ENCODE measurements at regions of chr22 and their contacts with region 1.

Region 1: DNA sequence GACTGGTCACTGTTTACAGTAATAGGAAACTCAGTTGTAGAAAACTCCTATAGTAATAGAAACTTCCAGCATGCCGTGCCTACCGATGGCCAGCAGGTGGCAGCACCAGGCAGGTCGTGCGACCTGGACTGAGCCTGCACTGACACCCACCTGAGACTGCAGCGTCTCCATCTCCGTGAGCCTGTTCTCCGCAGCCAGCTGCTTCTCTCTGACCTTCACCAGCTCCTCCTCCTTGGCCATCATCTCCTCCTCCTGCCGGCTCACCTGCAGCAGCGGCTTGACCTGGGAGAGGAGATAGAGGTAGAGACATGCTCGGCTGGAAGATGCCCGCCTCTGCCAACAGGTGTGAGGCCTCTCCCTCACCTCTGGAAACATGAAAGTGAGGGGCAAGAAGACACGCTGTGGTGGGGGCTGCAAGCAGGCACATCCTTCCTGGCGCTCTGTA is 48.5 kb downstream of the APOL1 start:
- DNase-seq: peak; percentile 73 to 91 (median 81)
- ATAC-seq: peak; percentile 88
- H3K4me3 ChIP-seq: no peak overlapping the region
- H3K4me3 Mint-ChIP-seq: peak overlapping the region; percentile 49
- H3K27ac ChIP-seq: no peak overlapping the region
- H3K27ac Mint-ChIP-seq: peak overlapping the region; percentile 84
- H3K4me1 ChIP-seq: peaks cover 14% of the 10 kb centered on the region
- H3K4me1 Mint-ChIP-seq: peaks cover 19% of the 10 kb centered on the region
- H3K27me3 ChIP-seq: no peaks in the 10 kb centered on the region
- H3K27me3 Mint-ChIP-seq: no peaks in the 10 kb centered on the region
- CTCF ChIP-seq: peak; percentile 93

Region 2: DNA sequence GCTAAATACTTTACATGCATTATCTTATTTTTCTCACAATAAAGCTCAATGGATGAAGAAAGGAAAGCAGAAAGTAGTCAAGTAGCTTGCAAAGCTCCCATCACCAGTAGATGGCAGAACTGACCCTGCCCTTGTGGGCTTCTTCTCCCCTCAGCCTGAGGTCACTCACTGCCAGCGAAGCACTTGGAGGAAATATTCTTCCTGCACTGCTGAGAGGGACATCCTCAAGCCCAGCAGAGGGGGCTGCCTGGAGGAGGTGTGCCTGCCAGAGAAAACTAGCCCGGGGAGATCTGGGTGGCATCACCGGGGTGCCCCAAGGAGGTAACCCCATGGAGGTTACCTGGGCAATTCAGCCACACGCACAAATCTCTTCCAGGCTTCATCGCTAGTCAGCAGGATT is 106.4 kb before region 1 on chr22:
- CTCF ChIA-PET with region 1: no interaction called
- POLR2A ChIA-PET with region 1: no interaction called
- intact Hi-C with region 1: no loop called
- DNase-seq: peak in 13 of 14 experiments; percentile 6 to 64 (median 23)
- ATAC-seq: peak; percentile 39
- H3K4me3 ChIP-seq: no peak overlapping the region
- H3K4me3 Mint-ChIP-seq: no peak overlapping the region
- H3K27ac ChIP-seq: no peak overlapping the region
- H3K27ac Mint-ChIP-seq: no peak overlapping the region
- H3K4me1 ChIP-seq: peaks cover 9% of the 10 kb centered on the region
- H3K4me1 Mint-ChIP-seq: peaks cover 6% of the 10 kb centered on the region
- H3K27me3 ChIP-seq: no peaks in the 10 kb centered on the region
- H3K27me3 Mint-ChIP-seq: peaks cover 18% of the 10 kb centered on the region
- CTCF ChIP-seq: peak; percentile 53

Region 3: DNA sequence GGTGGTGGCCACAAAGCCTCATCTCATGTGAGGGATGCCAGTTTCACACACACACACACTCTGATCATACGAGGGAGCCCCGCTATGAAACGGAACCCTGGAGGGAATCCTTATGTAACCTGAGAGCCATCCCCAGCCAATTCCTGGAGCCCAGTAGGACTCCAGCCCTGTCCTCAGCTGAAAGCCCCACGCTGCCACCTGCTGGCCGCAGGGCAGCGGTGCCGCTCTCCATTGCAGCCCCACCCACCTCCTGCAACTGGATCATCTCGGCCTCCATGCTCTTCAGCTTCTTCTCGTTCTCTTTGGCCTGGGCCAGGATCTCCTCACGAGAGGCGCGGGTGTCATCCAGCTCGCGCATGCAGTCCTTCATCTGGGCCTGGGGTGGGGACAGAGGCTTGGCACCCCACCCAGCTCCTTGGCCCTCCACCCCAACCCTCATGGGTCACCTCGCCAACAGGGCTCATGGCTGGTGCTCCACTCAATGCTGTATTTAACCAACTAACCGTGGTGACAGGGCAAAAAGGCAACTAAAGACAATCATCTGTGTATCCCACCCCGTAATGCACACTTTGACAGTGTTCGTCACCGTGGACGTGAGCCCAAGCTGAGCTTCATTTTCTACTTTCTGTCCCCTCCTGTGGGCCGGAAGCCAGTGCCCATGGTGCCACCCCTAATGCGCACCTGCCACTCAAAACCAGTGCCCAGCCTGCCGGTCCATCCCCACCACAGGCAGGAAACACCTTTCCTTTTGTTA is 14.8 kb before region 1 on chr22:
- CTCF ChIA-PET with region 1: interaction called, 13 read pairs
- POLR2A ChIA-PET with region 1: interaction called, 6 read pairs
- intact Hi-C with region 1: no loop called
- DNase-seq: peak; percentile 39 to 82 (median 61)
- ATAC-seq: peak; percentile 64
- H3K4me3 ChIP-seq: no peak overlapping the region
- H3K4me3 Mint-ChIP-seq: peak overlapping the region; percentile 56
- H3K27ac ChIP-seq: peak overlapping the region; percentile 9 to 47
- H3K27ac Mint-ChIP-seq: peak overlapping the region; percentile 95
- H3K4me1 ChIP-seq: peaks cover 55% of the 10 kb centered on the region
- H3K4me1 Mint-ChIP-seq: peaks cover 36% of the 10 kb centered on the region
- H3K27me3 ChIP-seq: no peaks in the 10 kb centered on the region
- H3K27me3 Mint-ChIP-seq: no peaks in the 10 kb centered on the region
- CTCF ChIP-seq: peak; percentile 73

Region 4: DNA sequence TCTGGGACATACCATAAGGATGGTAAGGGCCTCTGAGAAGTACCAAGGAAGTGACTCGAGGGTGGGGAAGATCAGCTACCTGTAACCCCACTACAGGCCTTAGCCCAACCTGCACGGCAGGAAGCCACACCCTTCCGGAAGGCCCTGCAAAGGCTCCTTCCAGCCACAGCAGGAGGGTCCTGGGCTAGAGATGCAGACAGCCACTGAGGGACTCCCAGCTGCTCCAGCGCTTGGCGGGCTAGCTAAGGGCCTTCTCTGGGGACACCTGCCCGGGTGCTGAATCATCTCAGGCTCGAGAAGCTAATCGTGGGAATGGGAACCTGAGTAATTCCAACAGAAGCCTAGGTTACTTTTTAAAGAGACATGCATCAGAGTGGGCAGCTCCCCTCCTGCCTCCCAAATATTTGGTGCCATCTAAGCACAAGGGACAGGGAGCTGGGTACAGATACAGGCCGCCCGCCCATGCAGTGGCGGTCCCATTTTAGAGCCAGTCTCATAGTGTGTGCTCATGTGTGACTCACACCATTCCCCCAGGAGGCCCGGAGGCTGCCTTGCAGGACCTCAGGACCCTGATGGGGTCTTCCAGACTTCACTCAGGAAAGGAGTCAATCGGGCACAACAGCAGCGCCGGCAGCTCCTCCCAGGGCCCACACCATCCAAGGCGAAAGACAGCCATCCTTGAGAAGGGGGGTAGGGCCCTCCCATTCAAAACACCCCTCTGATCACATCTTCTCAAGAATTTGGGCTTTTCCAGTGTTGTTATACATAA is 78.4 kb after region 1 on chr22:
- CTCF ChIA-PET with region 1: interaction called, 11 read pairs
- POLR2A ChIA-PET with region 1: interaction called, 7 read pairs
- intact Hi-C with region 1: no loop called
- DNase-seq: peak in 12 of 14 experiments; percentile 38 to 89 (median 63)
- ATAC-seq: peak; percentile 37
- H3K4me3 ChIP-seq: peak overlapping the region; percentile 31
- H3K4me3 Mint-ChIP-seq: peak overlapping the region; percentile 70
- H3K27ac ChIP-seq: peak overlapping the region; percentile 85 to 95
- H3K27ac Mint-ChIP-seq: peak overlapping the region; percentile 93
- H3K4me1 ChIP-seq: peaks cover 98% of the 10 kb centered on the region
- H3K4me1 Mint-ChIP-seq: peaks cover 85% of the 10 kb centered on the region
- H3K27me3 ChIP-seq: no peaks in the 10 kb centered on the region
- H3K27me3 Mint-ChIP-seq: no peaks in the 10 kb centered on the region
- CTCF ChIP-seq: no peak

Region 5: DNA sequence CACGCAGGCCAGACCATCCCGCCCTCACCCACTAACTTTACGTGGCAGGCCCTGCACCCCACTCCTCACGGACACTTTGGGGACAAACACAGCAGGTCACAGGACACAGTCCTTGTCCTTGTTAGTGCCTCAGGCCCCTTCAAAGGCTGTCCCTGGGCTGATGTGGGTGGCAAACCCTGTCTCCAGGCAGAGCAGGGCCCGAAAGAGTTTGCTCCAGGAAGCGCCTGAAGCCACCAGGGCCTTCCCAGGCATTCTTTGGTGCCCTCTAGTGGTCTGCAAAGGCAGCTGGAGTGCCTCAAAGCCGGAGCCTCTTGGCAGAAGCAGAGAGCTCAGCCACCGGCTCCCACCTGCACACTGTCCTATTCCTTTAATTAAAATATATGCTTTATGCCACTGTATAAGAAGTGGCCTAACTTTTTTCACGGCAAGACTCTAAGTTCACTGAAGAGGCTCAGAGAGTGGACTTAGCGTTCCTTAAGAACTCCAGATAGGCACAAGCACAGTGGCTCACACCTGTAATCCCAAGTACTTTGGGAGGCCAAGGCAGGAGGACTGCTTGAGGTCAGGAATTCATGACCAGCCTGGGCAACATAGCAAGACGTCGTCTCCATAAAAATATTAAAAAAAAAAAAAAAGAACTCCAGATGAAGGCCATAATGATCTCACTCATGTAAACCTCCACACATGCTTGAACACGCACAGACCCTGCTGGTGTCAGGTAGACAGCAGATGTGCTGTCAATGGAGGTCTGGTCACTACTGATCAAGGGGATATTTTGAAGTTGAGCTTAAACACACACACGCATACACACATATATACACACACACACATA is 169.0 kb after region 1 on chr22:
- CTCF ChIA-PET with region 1: interaction called, 60 read pairs
- POLR2A ChIA-PET with region 1: interaction called, 7 read pairs
- intact Hi-C with region 1: loop called (anchors 1 kb)
- DNase-seq: peak; percentile 71 to 92 (median 78)
- ATAC-seq: peak; percentile 98
- H3K4me3 ChIP-seq: no peak overlapping the region
- H3K4me3 Mint-ChIP-seq: no peak overlapping the region
- H3K27ac ChIP-seq: no peak overlapping the region
- H3K27ac Mint-ChIP-seq: peak overlapping the region; percentile 70
- H3K4me1 ChIP-seq: peaks cover 27% of the 10 kb centered on the region
- H3K4me1 Mint-ChIP-seq: peaks cover 26% of the 10 kb centered on the region
- H3K27me3 ChIP-seq: no peaks in the 10 kb centered on the region
- H3K27me3 Mint-ChIP-seq: no peaks in the 10 kb centered on the region
- CTCF ChIP-seq: peak; percentile 89

Region 6: GRCh38 chr22:36481393-36482168 is 180.2 kb after region 1 on chr22 and contains the start of gene TXN2:
- CTCF ChIA-PET with region 1: interaction called, 20 read pairs
- POLR2A ChIA-PET with region 1: interaction called, 4 read pairs
- intact Hi-C with region 1: loop called in 1 of 2 experiments (anchors 1 kb)
- DNase-seq: peak; percentile 92 to 98 (median 96)
- ATAC-seq: peak; percentile 87
- H3K4me3 ChIP-seq: peak within 1 kb of the TSS; percentile 67
- H3K4me3 Mint-ChIP-seq: peak within 1 kb of the TSS; percentile 95
- H3K27ac ChIP-seq: peak within 1 kb of the TSS; percentile 94 to 99
- H3K27ac Mint-ChIP-seq: peak within 1 kb of the TSS; percentile 92
- H3K4me1 ChIP-seq: peaks cover 22% of the 10 kb centered on the region
- H3K4me1 Mint-ChIP-seq: peaks cover 22% of the 10 kb centered on the region
- H3K27me3 ChIP-seq: no peaks in the 10 kb centered on the region
- H3K27me3 Mint-ChIP-seq: no peaks in the 10 kb centered on the region
- CTCF ChIP-seq: no peak
- total RNA-seq, gene TXN2: 26.4 to 26.5 TPM

Region 7: DNA sequence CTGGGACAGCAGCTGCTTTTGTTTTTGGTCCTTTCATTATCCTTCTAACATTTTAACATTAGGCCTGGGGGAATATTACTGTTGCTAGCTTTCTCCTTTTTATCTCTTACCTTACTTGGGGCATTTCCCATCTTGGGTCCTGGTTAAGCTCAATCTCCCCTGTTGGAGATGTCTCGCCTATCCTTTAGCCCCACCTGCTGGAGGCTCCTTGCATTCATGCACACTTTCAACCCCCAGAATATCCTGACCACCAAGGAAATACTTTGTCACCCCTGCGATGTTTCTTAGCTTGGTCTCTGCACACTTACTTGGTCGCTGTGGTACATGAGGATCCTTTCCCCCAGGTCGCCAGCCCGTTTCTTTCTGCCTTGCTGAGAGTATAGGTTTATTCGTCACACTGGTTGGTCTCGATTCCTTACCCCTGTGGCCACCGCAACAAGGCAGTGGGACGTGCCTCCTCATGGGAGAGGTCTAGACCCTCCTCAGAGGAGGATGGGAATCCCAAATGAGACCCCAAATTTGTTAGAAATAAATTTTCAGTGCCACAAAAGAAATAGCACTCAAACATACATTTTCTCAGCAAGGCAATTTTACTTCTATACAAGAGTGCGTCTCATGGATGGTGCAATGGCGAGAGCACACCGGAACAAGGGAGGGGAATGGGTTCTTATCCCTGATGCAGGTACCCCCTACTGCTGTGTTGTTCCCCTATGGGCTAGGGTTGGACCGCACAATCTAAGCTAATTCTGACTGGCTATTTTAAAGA is 185.4 kb after region 1 on chr22:
- CTCF ChIA-PET with region 1: interaction called, 20 read pairs
- POLR2A ChIA-PET with region 1: interaction called, 4 read pairs
- intact Hi-C with region 1: loop called in 1 of 2 experiments (anchors 1 kb)
- DNase-seq: peak; percentile 50 to 83 (median 59)
- ATAC-seq: no peak
- H3K4me3 ChIP-seq: no peak overlapping the region
- H3K4me3 Mint-ChIP-seq: peak overlapping the region; percentile 52
- H3K27ac ChIP-seq: no peak overlapping the region
- H3K27ac Mint-ChIP-seq: no peak overlapping the region
- H3K4me1 ChIP-seq: peaks cover 8% of the 10 kb centered on the region
- H3K4me1 Mint-ChIP-seq: peaks cover 5% of the 10 kb centered on the region
- H3K27me3 ChIP-seq: no peaks in the 10 kb centered on the region
- H3K27me3 Mint-ChIP-seq: no peaks in the 10 kb centered on the region
- CTCF ChIP-seq: peak; percentile 57

Measured in CD4-positive, alpha-beta T cell (primary cell).